H1 (cell line): ENCODE measurements at regions of chr12 and their contacts with region 1.

Region 1: GRCh38 chr12:143964-144649 is 69.8 kb downstream of the SLC6A12 start:
- DNase-seq: no peak
- H3K4me3 ChIP-seq: no peak overlapping the region
- H3K27ac ChIP-seq: no peak overlapping the region
- H3K4me1 ChIP-seq: peaks cover 4 to 38% (median 24%) of the 10 kb centered on the region in 4 experiments
- H3K27me3 ChIP-seq: peaks cover 0 to 23% (median 14%) of the 10 kb centered on the region in 4 experiments; a peak in 5 of 7 replicates
- CTCF ChIP-seq: no peak
- EP300 ChIP-seq: no peak
- POLR2A ChIP-seq: no peak
- RAD21 ChIP-seq: no peak; a peak in 1 of 4 replicates

Region 2: GRCh38 chr12:169528-170370 is 25.6 kb after region 1 on chr12:
- CTCF ChIA-PET with region 1: interaction called, 51 read pairs
- POLR2A ChIA-PET with region 1: interaction called, 6 read pairs
- DNase-seq: no peak
- H3K4me3 ChIP-seq: no peak overlapping the region
- H3K27ac ChIP-seq: no peak overlapping the region
- H3K4me1 ChIP-seq: peaks cover 3 to 28% (median 20%) of the 10 kb centered on the region in 4 experiments
- H3K27me3 ChIP-seq: peaks cover 0 to 3% (median 2%) of the 10 kb centered on the region in 4 experiments; a peak in 2 of 7 replicates
- CTCF ChIP-seq: no peak
- EP300 ChIP-seq: no peak
- POLR2A ChIP-seq: no peak
- RAD21 ChIP-seq: peak in 1 of 2 experiments; percentile 20; a peak in 1 of 4 replicates